Thyroid gland (tissue), 4 donors: ENCODE measurements at regions of chr5 and their contacts with region 1.

Region 1: GRCh38 chr5:11268891-11269290 is 507.9 kb upstream of the DAP start:
- DNase-seq: peak; percentile 63 to 66
- H3K4me3 ChIP-seq: no peak overlapping the region
- H3K27ac ChIP-seq: no peak overlapping the region
- H3K4me1 ChIP-seq: no peaks in the 10 kb centered on the region
- H3K27me3 ChIP-seq: no peaks in the 10 kb centered on the region
- CTCF ChIP-seq: no peak
- POLR2A ChIP-seq: no peak

Region 2: GRCh38 chr5:11494340-11494739 is 225.4 kb after region 1 on chr5:
- intact Hi-C with region 1: loop called (anchors 5 kb)
- DNase-seq: no peak
- H3K4me3 ChIP-seq: no peak overlapping the region
- H3K27ac ChIP-seq: no peak overlapping the region
- H3K4me1 ChIP-seq: no peaks in the 10 kb centered on the region
- H3K27me3 ChIP-seq: no peaks in the 10 kb centered on the region
- CTCF ChIP-seq: peak in 4 of 6 experiments; percentile 21 to 55 (median 50)
- POLR2A ChIP-seq: no peak